ENCODE measurements at regions of chr11 and their contacts with region 1.

Region 1: DNA sequence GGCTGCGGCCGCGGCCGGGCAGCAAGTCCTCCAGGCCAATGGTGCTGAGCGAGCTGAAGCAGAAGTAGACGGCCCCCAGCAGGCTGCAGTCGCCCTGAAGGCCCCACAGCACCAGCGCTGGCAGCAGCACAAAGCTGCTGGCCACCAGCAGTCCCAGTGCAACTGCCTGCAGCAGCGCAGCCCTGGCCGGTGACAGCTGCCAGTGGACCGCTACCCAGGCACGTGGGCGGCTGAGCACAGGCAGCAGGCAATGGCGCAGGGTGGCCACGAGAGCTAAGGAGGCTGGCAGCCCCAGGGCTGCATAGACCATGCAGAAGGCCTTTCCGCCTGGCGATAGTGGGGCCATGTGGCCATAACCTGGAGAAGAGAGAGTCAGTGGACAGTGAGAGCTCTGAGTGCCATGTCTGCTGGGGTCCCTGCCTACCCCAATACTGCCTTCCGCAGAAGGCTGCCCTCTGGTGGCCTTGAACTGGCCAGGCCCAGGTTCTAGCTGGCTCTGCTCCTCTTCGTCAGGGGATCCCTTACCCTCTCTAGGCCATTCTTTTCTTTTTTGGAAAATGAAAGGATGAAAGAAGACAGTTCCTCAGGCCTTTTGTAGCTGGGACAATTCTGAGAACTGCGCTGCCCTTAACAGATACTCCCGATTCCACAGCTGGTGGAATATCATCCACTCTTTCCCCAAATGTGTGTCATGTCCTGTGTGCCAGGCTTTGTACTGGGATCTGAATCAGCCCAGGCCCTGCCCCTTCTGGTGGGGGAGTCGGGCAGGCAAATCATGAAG is 1.9 kb downstream of the KCNK7 start:
- DNase-seq: no peak
- H3K4me3 ChIP-seq: no peak overlapping the region
- H3K27ac ChIP-seq: no peak overlapping the region
- H3K4me1 ChIP-seq: peaks cover 32% of the 10 kb centered on the region
- H3K27me3 ChIP-seq: no peaks in the 10 kb centered on the region
- CTCF ChIP-seq: peak; percentile 64 to 77

Region 2: DNA sequence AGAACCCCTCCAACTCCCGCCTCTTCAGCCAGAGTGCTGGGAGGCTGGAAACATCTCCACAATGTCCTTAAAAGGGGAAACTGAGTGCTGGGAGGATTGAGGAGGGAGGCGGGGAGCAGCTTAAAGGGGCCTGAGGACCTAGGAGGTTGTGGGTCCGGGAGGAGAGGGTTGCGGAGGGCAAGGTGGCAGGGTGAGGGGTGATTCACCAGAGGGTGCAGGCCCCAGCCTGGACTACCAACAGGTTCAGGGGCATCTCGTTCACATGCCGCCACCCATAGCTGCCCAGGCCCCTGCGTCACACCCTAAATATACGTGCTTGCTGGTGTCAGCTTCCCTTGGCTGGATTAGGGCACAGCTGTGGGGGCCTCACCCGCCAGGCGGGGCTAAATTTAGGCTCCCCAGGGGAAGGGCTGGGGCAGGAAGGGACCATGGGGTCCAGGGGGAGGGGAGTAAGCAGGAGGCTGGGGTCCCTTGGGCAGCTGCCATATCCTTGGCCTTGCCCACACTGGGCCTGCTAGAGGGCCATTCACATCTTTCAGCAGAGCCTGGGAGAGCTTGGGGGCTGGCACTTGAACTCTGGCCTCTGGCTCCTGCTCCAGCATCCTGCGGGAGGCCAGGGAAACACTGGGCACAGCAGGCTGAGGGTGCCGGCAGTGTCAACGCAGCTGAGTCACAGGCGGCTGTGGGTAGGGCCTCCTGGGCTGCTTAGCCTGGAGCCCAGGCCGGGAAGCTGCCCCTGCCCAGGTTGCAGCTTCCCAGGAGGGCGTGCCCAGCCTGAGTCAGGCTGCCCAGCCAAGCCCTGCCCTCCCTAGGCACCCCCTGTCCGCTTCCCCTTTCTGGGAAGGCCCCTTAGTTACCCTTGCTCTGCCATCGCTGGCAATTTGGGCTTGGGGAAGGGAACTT is 16.6 kb before region 1 on chr11:
- CTCF ChIA-PET with region 1: no interaction called
- dilution Hi-C with region 1: no loop called
- in situ Hi-C with region 1: no loop called
- intact Hi-C with region 1: loop called (anchors 1 kb)
- DNase-seq: peak; percentile 86
- H3K4me3 ChIP-seq: peak overlapping the region; percentile 49 to 68 (median 62)
- H3K27ac ChIP-seq: peak overlapping the region; percentile 29
- H3K4me1 ChIP-seq: peaks cover 46% of the 10 kb centered on the region
- H3K27me3 ChIP-seq: no peaks in the 10 kb centered on the region
- CTCF ChIP-seq: no peak

Region 3: GRCh38 chr11:65773784-65774411 is 180.2 kb after region 1 on chr11:
- CTCF ChIA-PET with region 1: no interaction called
- dilution Hi-C with region 1: no loop called
- in situ Hi-C with region 1: no loop called
- intact Hi-C with region 1: no loop called
- DNase-seq: peak; percentile 38
- H3K4me3 ChIP-seq: no peak overlapping the region
- H3K27ac ChIP-seq: no peak overlapping the region
- H3K4me1 ChIP-seq: peaks cover 15% of the 10 kb centered on the region
- H3K27me3 ChIP-seq: no peaks in the 10 kb centered on the region
- CTCF ChIP-seq: peak; percentile 19 to 37

Measured in mammary epithelial cell (primary cell).